Head of caudate nucleus (tissue), 42 donors: ENCODE measurements at regions of chr12 and their contacts with region 1.

Region 1: DNA sequence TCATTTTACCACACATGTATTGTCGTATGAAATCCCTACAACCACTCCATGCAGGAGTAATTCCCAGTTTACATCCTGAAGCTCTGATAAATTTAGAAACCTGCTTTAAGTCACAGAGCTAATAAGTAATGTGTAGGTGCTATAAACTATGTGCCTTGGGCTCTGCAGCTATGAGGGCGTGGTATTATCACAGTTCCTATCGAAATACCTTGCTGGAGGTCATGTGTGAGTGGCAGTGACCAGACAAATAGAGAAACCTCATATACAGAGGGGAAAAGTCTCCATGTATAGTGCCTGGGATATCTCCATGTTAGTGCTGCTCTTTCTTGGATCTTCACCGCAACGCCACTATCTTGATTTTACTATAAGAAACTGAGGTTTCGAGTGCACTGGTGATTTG is 883 bp upstream of the TBC1D15 start:
- DNase-seq: no peak

Region 2: GRCh38 chr12:71780237-71780822 is 58.3 kb before region 1 on chr12:
- intact Hi-C with region 1: loop called (anchors 5 kb)
- DNase-seq: peak; percentile 4 to 82 (median 56)

Region 3: GRCh38 chr12:71790331-71790730 is 48.3 kb before region 1 on chr12:
- intact Hi-C with region 1: no loop called
- DNase-seq: no peak

Region 4: GRCh38 chr12:71981149-71981548 is 142.5 kb after region 1 on chr12:
- intact Hi-C with region 1: no loop called
- DNase-seq: no peak